ENCODE measurements at regions of chr17 and their contacts with region 1.

Region 1: DNA sequence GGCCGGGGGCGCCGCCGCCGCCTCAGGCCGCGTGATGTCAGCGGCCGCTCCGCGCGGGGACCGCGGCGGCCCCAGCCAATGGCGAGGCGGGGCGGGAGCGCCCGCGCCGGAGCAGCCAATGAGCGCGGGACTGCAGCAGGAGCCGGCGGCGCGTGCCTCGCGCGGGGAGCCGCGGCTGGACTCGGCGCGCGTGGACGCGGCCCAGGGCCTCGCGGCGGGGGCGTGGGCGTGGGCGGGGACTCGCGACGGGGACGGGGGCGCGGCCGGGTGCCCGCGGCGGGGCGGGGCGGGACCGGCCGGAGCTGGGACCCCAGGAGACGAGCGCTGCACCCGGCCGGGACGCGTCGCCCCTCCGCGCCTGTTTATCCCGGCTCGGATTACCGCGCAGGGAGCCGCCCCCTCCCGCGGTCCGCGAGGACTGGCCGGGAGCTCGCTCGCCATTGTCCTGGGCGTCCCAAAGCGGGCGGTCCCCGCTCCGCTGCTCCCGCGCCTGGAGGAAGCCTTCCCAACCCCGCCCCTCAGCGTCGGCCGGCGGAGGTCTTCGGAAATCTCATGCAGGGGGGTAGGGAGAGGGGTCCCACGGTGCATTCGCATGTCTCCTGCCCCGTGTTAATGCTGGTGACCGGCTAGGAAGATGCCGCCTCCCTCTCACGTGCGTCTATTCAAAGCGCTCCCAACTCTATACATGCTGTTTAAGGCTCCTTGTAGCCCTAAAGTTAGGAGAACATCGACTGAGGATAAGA is at the start of gene RNF157:
- DNase-seq: peak; percentile 71
- ATAC-seq: peak; percentile 90
- H3K4me3 ChIP-seq: peak within 1 kb of the TSS; percentile 75
- H3K27ac ChIP-seq: no peak within 1 kb of the TSS
- H3K4me1 ChIP-seq: peaks cover 16% of the 10 kb centered on the region; the same call in 1 of the 2 replicates
- H3K27me3 ChIP-seq: no peaks in the 10 kb centered on the region
- CTCF ChIP-seq: no peak
- total RNA-seq, gene RNF157: 7.3 and 7.4 TPM in 2 replicates

Region 2: DNA sequence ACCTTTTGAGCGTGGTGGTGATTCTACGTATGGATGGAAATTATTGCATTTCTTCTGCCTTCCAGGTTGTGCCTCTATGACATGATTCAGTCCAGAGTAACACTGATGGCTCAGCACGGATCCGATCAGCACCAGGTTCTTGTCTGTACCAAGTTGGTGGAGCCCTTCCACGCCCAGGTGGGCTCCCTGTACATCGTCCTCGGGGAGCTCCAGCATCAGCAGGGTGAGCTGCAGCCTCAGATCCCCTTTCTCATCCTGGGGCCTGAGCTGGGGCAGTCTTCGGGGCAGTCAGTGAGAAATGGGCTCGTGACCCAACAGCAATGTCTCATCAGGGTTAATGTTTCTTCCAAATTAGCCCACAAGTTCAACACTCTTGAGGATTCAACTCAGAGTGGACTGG is 249.2 kb before region 1 on chr17:
- CTCF ChIA-PET with region 1: no interaction called
- POLR2A ChIA-PET with region 1: interaction called, 12 read pairs
- intact Hi-C with region 1: no loop called
- DNase-seq: no peak
- ATAC-seq: no peak
- H3K4me3 ChIP-seq: no peak overlapping the region
- H3K27ac ChIP-seq: no peak overlapping the region
- H3K4me1 ChIP-seq: peaks cover 5% of the 10 kb centered on the region
- H3K27me3 ChIP-seq: no peaks in the 10 kb centered on the region
- CTCF ChIP-seq: no peak

Region 3: DNA sequence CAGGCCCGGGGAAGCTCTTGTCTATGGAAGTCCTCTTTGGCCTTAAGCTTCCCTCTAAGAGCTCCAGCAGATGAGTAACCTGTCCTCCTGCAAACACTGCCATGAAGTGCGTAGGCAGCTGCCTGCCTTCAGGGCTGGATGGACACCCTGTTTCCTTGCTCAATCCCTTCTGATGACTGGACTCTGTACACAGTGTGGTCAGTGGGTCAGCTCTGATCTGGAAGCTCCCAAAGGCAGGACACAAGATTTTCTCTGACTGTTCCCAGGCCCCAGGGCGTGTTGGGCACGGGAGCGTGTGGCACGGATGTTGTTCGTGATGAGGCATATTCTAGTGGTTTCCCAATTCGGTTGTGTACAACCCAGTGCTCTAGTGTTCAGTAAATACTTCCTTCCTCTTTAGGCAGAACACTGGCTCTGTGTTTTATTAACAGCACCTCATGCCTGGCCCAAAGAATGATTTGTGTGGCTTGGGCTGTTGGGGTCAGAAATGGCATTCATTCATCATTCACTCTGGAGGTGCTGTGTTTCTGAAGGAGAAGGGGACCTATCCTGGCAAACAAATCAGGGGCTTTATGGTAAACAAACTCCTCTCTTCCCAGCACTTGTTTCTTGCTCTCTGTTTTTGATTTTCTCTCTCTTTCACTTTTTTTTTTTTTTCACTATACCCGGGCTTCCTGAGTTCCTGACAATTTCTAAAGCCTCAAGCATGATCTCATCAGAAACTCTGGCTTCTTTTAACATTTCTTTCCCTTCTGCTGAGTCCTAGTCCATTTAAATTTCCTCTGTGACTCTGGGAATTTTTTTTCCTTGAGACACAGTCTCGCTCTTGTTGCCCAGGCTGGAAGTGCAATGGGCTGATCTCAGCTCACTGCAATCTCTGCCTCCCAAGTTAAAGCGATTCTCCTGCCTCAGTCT is 11.7 kb after region 1 on chr17:
- CTCF ChIA-PET with region 1: no interaction called
- POLR2A ChIA-PET with region 1: interaction called, 5 read pairs
- intact Hi-C with region 1: loop called (anchors 1 kb)
- DNase-seq: peak; percentile 100
- ATAC-seq: peak; percentile 98
- H3K4me3 ChIP-seq: peak overlapping the region; percentile 35; the same call in 1 of the 2 replicates
- H3K27ac ChIP-seq: peak overlapping the region; percentile 93
- H3K4me1 ChIP-seq: peaks cover 25% of the 10 kb centered on the region
- H3K27me3 ChIP-seq: no peaks in the 10 kb centered on the region
- CTCF ChIP-seq: no peak